Heart left ventricle (tissue), 16 donors: ENCODE measurements at regions of chr11 and their contacts with region 1.

Region 1: GRCh38 chr11:82682003-82682751 is 51.5 kb downstream of the FAM181B start:
- DNase-seq: peak in 2 of 5 donors; percentile 12 to 19
- ATAC-seq: peak in 3 of 4 donors; percentile 79 to 87 (median 85)
- H3K4me3 ChIP-seq: no peak overlapping the region
- H3K27ac ChIP-seq: no peak overlapping the region
- H3K4me1 ChIP-seq: no peaks in the 10 kb centered on the region
- H3K27me3 ChIP-seq: peaks cover 0 to 9% (median 3%) of the 10 kb centered on the region in 9 donors
- CTCF ChIP-seq: peak; percentile 44 to 70 (median 59)
- POLR2A ChIP-seq: no peak

Region 2: DNA sequence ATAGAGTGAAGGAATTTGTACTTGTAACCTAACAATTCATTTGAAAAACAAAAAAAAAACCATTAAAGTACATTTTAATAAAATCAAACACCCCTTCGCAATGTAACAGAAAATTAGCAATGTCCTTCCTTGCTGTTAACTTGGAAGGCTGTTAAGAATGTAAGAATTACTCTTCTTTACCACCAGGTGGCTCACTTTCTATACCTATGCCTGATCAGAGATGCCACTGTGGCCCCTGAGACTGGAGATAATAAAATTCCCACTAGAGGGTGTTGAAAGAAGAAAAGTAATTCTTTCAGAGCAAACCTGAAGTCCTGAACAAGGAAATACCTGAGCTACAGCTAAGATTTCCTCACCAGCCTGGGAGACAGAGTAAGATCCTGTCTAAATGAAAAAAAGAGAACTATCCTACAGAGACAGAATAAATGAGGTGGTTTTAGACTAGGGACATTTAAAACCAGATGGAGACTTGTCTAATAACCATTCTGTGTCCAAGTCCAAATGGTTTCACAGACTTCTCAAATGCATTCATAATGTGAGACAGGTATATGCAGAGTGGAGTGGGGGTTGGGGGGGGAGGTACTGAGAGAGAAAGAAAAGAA is 1037.8 kb before region 1 on chr11:
- intact Hi-C with region 1: loop called in 1 of 10 experiments (anchors 10 kb)
- DNase-seq: no peak
- ATAC-seq: no peak
- H3K4me3 ChIP-seq: no peak overlapping the region
- H3K27ac ChIP-seq: no peak overlapping the region
- H3K4me1 ChIP-seq: no peaks in the 10 kb centered on the region
- H3K27me3 ChIP-seq: no peaks in the 10 kb centered on the region
- CTCF ChIP-seq: peak; percentile 28 to 63 (median 43)
- POLR2A ChIP-seq: no peak

Region 3: GRCh38 chr11:82557274-82557673 is 124.9 kb before region 1 on chr11:
- intact Hi-C with region 1: no loop called
- DNase-seq: peak in 4 of 5 donors; percentile 15 to 54 (median 40)
- ATAC-seq: peak in 2 of 4 donors; percentile 48 to 49
- H3K4me3 ChIP-seq: no peak overlapping the region
- H3K27ac ChIP-seq: no peak overlapping the region
- H3K4me1 ChIP-seq: no peaks in the 10 kb centered on the region
- H3K27me3 ChIP-seq: no peaks in the 10 kb centered on the region
- CTCF ChIP-seq: no peak
- POLR2A ChIP-seq: no peak

Region 4: GRCh38 chr11:83241291-83241946 is 559.2 kb after region 1 on chr11:
- intact Hi-C with region 1: loop called in 1 of 10 experiments (anchors 10 kb)
- DNase-seq: peak in 2 of 5 donors; percentile 41 to 52
- ATAC-seq: peak in 3 of 4 donors; percentile 62 to 88 (median 79)
- H3K4me3 ChIP-seq: no peak overlapping the region
- H3K27ac ChIP-seq: no peak overlapping the region
- H3K4me1 ChIP-seq: no peaks in the 10 kb centered on the region
- H3K27me3 ChIP-seq: no peaks in the 10 kb centered on the region
- CTCF ChIP-seq: peak; percentile 31 to 69 (median 49)
- POLR2A ChIP-seq: no peak

Region 5: DNA sequence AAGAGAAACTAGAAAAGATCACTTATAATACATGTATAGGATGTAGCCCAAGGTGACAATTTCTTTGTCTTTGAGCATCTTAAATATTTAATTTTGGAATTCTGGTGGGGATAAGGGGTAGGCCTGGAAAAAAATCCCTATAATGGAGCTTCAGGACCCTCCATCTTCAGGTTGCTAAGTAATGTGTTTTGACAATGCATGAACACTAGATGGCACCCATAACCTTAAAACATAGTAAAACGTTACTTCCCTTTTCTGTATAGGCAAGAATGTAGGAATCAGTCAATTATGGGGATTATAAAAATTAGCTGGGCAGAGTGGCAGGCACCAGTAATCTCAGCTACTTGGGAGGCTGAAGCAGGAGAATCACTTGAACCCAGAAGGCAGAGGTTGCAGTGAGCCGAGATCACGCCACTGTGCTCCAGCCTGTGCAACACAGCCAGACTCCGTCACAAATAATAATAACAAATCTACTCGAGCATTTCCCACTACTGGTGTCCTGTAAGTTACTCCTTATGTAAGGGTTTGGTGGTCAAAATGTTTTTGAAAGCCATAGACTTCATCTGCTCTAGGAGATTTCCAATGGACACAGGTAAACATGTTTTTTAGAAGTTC is 1145.9 kb after region 1 on chr11:
- intact Hi-C with region 1: loop called in 1 of 10 experiments (anchors 10 kb)
- DNase-seq: no peak
- ATAC-seq: peak in 2 of 4 donors; percentile 34 to 49
- H3K4me3 ChIP-seq: peak overlapping the region in 5 of 12 donors; percentile 8 to 50 (median 34)
- H3K27ac ChIP-seq: no peak overlapping the region
- H3K4me1 ChIP-seq: peaks cover 0 to 5% (median 0%) of the 10 kb centered on the region in 12 donors
- H3K27me3 ChIP-seq: no peaks in the 10 kb centered on the region
- CTCF ChIP-seq: peak; percentile 25 to 67 (median 52)
- POLR2A ChIP-seq: no peak